Gastrocnemius medialis (tissue), 4 donors: ENCODE measurements at regions of chr1 and their contacts with region 1.

Region 1: GRCh38 chr1:112809253-112809684 is 94.1 kb upstream of the PPM1J start:
- DNase-seq: peak; percentile 19 to 58
- ATAC-seq: peak in 1 of 2 donors; percentile 56
- H3K4me3 ChIP-seq: no peak overlapping the region
- H3K27ac ChIP-seq: peak overlapping the region; percentile 71 to 80 (median 76)
- H3K4me1 ChIP-seq: peaks cover 13 to 23% of the 10 kb centered on the region in 2 donors
- H3K27me3 ChIP-seq: no peaks in the 10 kb centered on the region
- CTCF ChIP-seq: peak; percentile 51 to 85 (median 70)
- POLR2A ChIP-seq: no peak

Region 2: DNA sequence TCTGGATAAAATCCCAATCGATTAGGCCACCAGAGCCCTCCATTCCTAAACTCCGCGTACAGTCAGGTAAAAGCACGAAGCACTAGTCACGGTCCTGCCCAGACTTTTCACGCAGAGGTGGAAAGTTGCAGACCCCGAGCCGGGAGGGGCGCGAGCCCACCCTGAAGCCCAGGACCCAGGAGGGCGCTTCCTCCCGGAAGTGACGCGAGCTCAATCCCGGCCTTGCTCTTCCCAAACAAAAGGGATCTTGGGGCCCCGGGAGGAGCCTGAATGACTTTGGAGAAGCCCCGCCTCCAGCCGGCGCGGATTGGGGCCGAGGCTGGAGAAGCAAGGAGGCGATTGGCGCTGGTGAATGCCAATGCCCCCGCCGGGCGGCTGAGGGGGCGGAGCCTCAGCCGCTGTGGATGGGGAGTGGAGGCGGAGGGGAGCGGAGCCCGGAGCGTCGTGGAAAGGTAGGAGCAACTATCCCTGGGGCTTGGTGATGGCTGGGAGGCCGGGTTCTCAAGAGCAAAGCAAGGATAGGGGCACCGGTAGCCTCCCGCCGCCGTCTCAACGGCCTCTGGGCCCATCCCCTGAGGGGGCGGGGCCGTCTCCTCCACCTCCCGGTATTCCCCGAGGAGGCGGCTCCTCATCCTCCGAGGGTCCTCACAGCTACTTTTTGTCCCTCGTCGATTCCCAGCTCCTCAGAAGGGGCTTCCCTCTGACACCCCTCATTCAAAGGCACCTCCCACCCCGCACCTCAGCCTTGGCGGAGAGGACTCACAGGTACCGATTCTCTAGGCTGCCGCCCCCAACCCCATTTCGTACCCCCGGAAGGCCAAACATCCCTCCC is 413.2 kb before region 1 on chr1 and contains the start of gene CTTNBP2NL:
- in situ Hi-C with region 1: no loop called
- intact Hi-C with region 1: loop called (anchors 5 kb)
- DNase-seq: peak; percentile 92 to 95
- ATAC-seq: peak; percentile 92 to 94
- H3K4me3 ChIP-seq: peak within 1 kb of the TSS; percentile 84 to 97 (median 90)
- H3K27ac ChIP-seq: peak within 1 kb of the TSS; percentile 67 to 91 (median 83)
- H3K4me1 ChIP-seq: peaks cover 24 to 32% of the 10 kb centered on the region in 2 donors
- H3K27me3 ChIP-seq: no peaks in the 10 kb centered on the region
- CTCF ChIP-seq: no peak
- POLR2A ChIP-seq: peak; percentile 57 to 66
- total RNA-seq, gene CTTNBP2NL: 2.6 to 7.2 (median 3.9) TPM

Region 3: GRCh38 chr1:113042285-113043143 is 233.2 kb after region 1 on chr1:
- in situ Hi-C with region 1: no loop called
- intact Hi-C with region 1: loop called (anchors 2 kb)
- DNase-seq: peak; percentile 42 to 66
- ATAC-seq: peak; percentile 90 to 92
- H3K4me3 ChIP-seq: no peak overlapping the region
- H3K27ac ChIP-seq: no peak overlapping the region
- H3K4me1 ChIP-seq: peaks cover 0 to 7% of the 10 kb centered on the region in 2 donors
- H3K27me3 ChIP-seq: no peaks in the 10 kb centered on the region
- CTCF ChIP-seq: peak; percentile 67 to 78 (median 73)
- POLR2A ChIP-seq: no peak